AG04450 (cell line): ENCODE measurements at regions of chr3 and their contacts with region 1.

Region 1: GRCh38 chr3:130276203-130276803 is 69.2 kb upstream of the COL6A5 start:
- DNase-seq: peak; percentile 20
- H3K4me3 ChIP-seq: no peak overlapping the region
- H3K27ac ChIP-seq: no peak overlapping the region
- H3K27me3 ChIP-seq: no peaks in the 10 kb centered on the region
- CTCF ChIP-seq: peak; percentile 96

Region 2: GRCh38 chr3:130288670-130289069 is 12.4 kb after region 1 on chr3:
- CTCF ChIA-PET with region 1: interaction called, 17 read pairs
- POLR2A ChIA-PET with region 1: no interaction called
- DNase-seq: no peak
- H3K4me3 ChIP-seq: no peak overlapping the region
- H3K27ac ChIP-seq: no peak overlapping the region
- H3K27me3 ChIP-seq: no peaks in the 10 kb centered on the region
- CTCF ChIP-seq: no peak

Region 3: GRCh38 chr3:130395916-130396315 is 119.6 kb after region 1 on chr3:
- CTCF ChIA-PET with region 1: no interaction called
- POLR2A ChIA-PET with region 1: no interaction called
- DNase-seq: no peak
- H3K4me3 ChIP-seq: no peak overlapping the region
- H3K27ac ChIP-seq: no peak overlapping the region
- H3K27me3 ChIP-seq: no peaks in the 10 kb centered on the region
- CTCF ChIP-seq: no peak

Region 4: DNA sequence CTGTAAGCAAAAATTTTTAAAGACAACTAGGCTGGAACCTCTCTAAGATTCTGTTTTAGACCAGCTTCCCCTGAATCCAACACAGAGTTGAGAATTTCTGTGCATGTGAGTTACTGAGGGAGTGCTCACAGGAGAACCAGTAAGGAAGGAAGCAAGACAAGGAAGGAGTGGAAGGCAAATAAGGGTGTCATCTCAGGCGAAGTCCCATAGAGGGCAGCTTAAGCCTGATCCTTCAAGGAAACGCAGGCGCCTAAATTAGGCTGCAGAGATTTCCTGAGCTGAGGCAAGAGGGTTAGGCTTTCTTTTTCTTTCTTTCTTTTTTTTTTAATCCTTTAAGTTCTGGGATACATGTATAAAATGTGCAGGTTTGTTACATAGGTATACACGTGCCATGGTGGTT is 204.4 kb after region 1 on chr3:
- CTCF ChIA-PET with region 1: no interaction called
- POLR2A ChIA-PET with region 1: no interaction called
- DNase-seq: peak; percentile 1
- H3K4me3 ChIP-seq: no peak overlapping the region
- H3K27ac ChIP-seq: no peak overlapping the region
- H3K27me3 ChIP-seq: no peaks in the 10 kb centered on the region
- CTCF ChIP-seq: peak; percentile 50